Vagina (tissue), 2 donors: ENCODE measurements at regions of chr1 and their contacts with region 1.

Region 1: DNA sequence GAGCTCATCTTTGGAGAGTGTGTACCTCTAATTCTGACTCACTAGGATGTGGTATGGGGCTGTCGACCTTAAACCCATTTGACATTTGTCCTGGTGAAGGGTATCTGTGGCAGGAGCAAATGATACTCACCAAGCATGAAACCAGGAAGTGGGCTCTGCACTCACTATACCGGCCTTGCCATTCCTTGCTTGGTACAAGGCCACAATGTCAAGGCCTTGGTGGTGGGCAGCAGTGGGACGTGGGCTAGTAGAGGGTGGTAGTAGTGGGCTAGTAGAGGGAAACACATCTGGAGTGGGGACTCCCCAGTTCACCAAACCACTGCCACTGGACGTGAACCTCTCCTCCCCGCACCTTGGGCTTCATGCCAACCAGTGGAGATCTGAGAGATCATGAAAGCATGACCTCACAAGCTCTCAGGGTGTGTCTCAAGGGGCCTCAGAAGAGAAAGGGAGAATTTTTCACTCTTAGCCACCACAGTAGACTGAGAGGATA is 11.5 kb downstream of the TNFSF4 start:
- DNase-seq: no peak
- H3K4me3 ChIP-seq: no peak overlapping the region
- H3K27ac ChIP-seq: no peak overlapping the region
- H3K4me1 ChIP-seq: peaks cover 6% of the 10 kb centered on the region
- H3K27me3 ChIP-seq: no peaks in the 10 kb centered on the region
- CTCF ChIP-seq: no peak
- POLR2A ChIP-seq: no peak

Region 2: DNA sequence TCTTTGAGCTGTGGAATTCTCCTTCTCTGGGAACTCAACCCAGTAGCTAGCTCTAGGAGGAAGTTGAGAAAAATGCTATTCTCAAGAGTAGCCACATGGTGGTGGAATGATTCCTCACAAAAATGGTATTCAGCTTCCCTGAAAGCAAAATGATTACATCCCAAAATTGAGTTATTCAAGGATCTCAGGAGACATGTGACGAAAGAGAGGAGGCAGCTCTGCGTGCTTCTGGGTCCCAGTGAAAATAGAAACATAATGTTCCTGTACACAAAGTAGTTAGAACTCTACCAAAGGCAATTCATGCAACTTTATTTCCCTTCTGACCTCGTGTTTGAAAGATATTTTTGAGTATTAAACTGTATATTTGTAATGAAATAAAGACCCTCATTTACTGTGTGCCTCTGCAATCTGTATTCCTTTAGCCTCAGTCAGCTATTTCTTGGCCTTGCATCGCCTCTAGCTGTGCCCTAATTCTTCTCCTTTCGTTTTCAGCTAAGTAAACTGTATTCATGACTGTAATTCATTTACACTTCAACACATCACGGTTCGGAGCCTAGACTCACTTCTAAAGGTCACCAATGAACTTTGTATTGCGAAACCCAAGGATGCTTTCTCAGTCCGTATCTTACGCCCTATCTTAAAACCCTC is 369.4 kb before region 1 on chr1:
- intact Hi-C with region 1: loop called (anchors 5 kb)
- DNase-seq: no peak
- H3K4me3 ChIP-seq: peak overlapping the region; percentile 16 to 21
- H3K27ac ChIP-seq: peak overlapping the region; percentile 66
- H3K4me1 ChIP-seq: peaks cover 8% of the 10 kb centered on the region
- H3K27me3 ChIP-seq: no peaks in the 10 kb centered on the region
- CTCF ChIP-seq: peak; percentile 30 to 76 (median 34)
- POLR2A ChIP-seq: no peak

Region 3: DNA sequence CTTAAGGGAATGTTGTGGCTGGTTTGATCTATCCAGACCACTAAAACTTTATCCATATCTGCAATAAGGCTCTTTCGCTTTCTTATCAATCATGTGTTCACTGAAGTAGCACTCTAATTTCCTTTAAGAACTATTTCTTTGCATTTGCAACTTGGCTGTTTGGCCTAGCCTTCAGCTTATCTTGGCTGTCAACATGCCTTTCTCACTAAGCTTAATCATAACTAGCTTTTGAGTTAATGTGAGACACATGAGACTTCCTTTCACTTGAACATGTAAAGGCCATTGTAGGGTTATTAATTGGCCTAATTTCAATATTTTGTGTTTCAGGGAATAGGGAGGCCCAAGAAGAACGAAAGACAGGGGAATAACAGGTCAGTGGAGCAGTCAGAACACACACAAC is 269.6 kb before region 1 on chr1:
- intact Hi-C with region 1: no loop called
- DNase-seq: no peak
- H3K4me3 ChIP-seq: no peak overlapping the region
- H3K27ac ChIP-seq: no peak overlapping the region
- H3K4me1 ChIP-seq: peaks cover 15% of the 10 kb centered on the region
- H3K27me3 ChIP-seq: no peaks in the 10 kb centered on the region
- CTCF ChIP-seq: no peak
- POLR2A ChIP-seq: no peak